BJ (cell line): ENCODE measurements at regions of chr7 and their contacts with region 1.

Region 1: GRCh38 chr7:102916426-102916825 is 3.6 kb downstream of the LRRC17 start:
- DNase-seq: no peak
- H3K4me3 ChIP-seq: no peak overlapping the region
- H3K27me3 ChIP-seq: no peaks in the 10 kb centered on the region
- CTCF ChIP-seq: no peak

Region 2: DNA sequence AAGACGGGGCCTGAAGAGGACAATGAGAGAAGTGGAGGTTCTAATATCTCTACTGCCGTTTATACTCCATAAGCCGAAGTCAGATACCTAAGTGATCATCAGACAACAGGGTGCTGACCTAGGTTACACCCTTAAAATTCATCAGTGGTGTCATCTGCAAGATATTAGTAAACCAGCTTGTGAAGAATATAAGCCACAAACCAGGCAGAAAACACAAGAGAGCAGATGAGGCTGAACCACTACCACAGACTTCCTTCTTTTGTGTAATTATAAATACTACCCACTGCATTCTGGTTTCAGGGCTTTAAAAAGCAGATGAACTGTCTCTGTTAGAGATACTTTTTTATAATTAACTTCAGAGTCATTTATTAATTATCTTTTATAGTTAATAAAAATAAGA is 72.6 kb before region 1 on chr7:
- CTCF ChIA-PET with region 1: no interaction called
- POLR2A ChIA-PET with region 1: no interaction called
- DNase-seq: no peak
- H3K4me3 ChIP-seq: no peak overlapping the region
- H3K27me3 ChIP-seq: no peaks in the 10 kb centered on the region
- CTCF ChIP-seq: no peak

Region 3: GRCh38 chr7:102874166-102874829 is 42.1 kb before region 1 on chr7:
- CTCF ChIA-PET with region 1: no interaction called
- POLR2A ChIA-PET with region 1: interaction called, 10 read pairs
- DNase-seq: no peak
- H3K4me3 ChIP-seq: no peak overlapping the region
- H3K27me3 ChIP-seq: no peaks in the 10 kb centered on the region
- CTCF ChIP-seq: no peak

Region 4: GRCh38 chr7:102927303-102927933 is 11.0 kb after region 1 on chr7:
- CTCF ChIA-PET with region 1: no interaction called
- POLR2A ChIA-PET with region 1: no interaction called
- DNase-seq: no peak
- H3K4me3 ChIP-seq: no peak overlapping the region
- H3K27me3 ChIP-seq: no peaks in the 10 kb centered on the region
- CTCF ChIP-seq: no peak